ENCODE measurements at regions of chr1 and their contacts with region 1.

Region 1: GRCh38 chr1:155127105-155127964 is at the start of gene EFNA1:
- DNase-seq: peak; percentile 99
- ATAC-seq: peak; percentile 61
- H3K4me3 ChIP-seq: peak within 1 kb of the TSS; percentile 96 to 99 (median 99)
- H3K27ac ChIP-seq: peak within 1 kb of the TSS; percentile 100
- H3K4me1 ChIP-seq: peaks cover 46% of the 10 kb centered on the region
- H3K27me3 ChIP-seq: no peaks in the 10 kb centered on the region; a peak in 1 of 5 replicates
- CTCF ChIP-seq: no peak
- EP300 ChIP-seq: peak; percentile 96 to 99
- POLR2A ChIP-seq: peak in 1 of 2 experiments; percentile 92; a peak in 2 of 4 replicates
- RAD21 ChIP-seq: peak; percentile 18
- total RNA-seq, gene EFNA1: 41.2 and 81.8 TPM in 2 replicates

Region 2: GRCh38 chr1:155091071-155091709 is 36.1 kb before region 1 on chr1:
- CTCF ChIA-PET with region 1: interaction called, 8 read pairs
- POLR2A ChIA-PET with region 1: interaction called, 75 read pairs
- in situ Hi-C with region 1: loop called (anchors 5 kb)
- intact Hi-C with region 1: loop called (anchors 5 kb)
- DNase-seq: peak; percentile 78
- ATAC-seq: peak; percentile 79
- H3K4me3 ChIP-seq: peak overlapping the region in 2 of 3 experiments; percentile 9 to 54; a peak in 2 of 6 replicates
- H3K27ac ChIP-seq: peak overlapping the region; percentile 52
- H3K4me1 ChIP-seq: peaks cover 77% of the 10 kb centered on the region
- H3K27me3 ChIP-seq: peaks cover 0 to 2% of the 10 kb centered on the region in 2 experiments; a peak in 1 of 5 replicates
- CTCF ChIP-seq: peak; percentile 98
- EP300 ChIP-seq: no peak; a peak in 1 of 4 replicates
- POLR2A ChIP-seq: no peak
- RAD21 ChIP-seq: peak; percentile 95

Region 3: DNA sequence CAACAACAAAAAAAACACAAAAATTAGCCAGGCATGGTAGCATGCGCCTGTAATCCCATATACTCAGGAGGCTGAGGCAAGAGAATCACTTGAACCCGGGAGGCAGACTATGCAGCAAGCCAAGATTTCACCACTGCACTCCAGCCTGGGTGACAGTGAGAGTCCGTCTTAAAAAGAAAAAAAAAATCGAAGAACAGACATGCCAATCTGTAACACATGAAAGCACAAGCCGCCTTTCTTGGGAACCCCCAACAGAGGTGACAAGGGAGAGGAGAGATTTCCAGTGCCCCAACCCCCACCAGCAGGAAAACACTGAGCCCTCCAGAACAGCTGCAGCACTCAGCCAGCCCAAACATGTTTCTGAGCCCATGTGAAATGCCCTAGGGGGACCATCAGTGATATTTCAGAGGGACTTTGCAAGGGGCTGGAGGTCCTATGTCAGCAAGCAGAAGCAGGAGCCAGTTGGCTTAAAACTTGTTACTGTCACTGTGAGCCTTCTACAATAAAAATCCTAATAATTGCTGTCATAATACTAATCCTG is 13.8 kb before region 1 on chr1:
- CTCF ChIA-PET with region 1: no interaction called
- POLR2A ChIA-PET with region 1: interaction called, 32 read pairs
- in situ Hi-C with region 1: no loop called
- intact Hi-C with region 1: no loop called
- DNase-seq: no peak
- ATAC-seq: no peak
- H3K4me3 ChIP-seq: no peak overlapping the region
- H3K27ac ChIP-seq: no peak overlapping the region
- H3K4me1 ChIP-seq: peaks cover 23% of the 10 kb centered on the region
- H3K27me3 ChIP-seq: peaks cover 0 to 7% of the 10 kb centered on the region in 2 experiments; a peak in 1 of 5 replicates
- CTCF ChIP-seq: no peak
- EP300 ChIP-seq: no peak
- POLR2A ChIP-seq: no peak
- RAD21 ChIP-seq: no peak

Region 4: GRCh38 chr1:155172732-155173477 is 45.6 kb after region 1 on chr1 and contains the start of gene KRTCAP2:
- CTCF ChIA-PET with region 1: interaction called, 3 read pairs
- POLR2A ChIA-PET with region 1: interaction called, 56 read pairs
- in situ Hi-C with region 1: no loop called
- intact Hi-C with region 1: no loop called
- DNase-seq: peak; percentile 93
- ATAC-seq: peak; percentile 78
- H3K4me3 ChIP-seq: peak within 1 kb of the TSS; percentile 71 to 92 (median 79)
- H3K27ac ChIP-seq: peak within 1 kb of the TSS; percentile 73
- H3K4me1 ChIP-seq: peaks cover 43% of the 10 kb centered on the region
- H3K27me3 ChIP-seq: 0 out of 5 replicates have a peak, but pooled peaks cover 0 to 1% of the 10 kb centered on the region in 2 experiments
- CTCF ChIP-seq: peak; percentile 98
- EP300 ChIP-seq: peak in 1 of 2 experiments; percentile 37; a peak in 1 of 4 replicates
- POLR2A ChIP-seq: peak; percentile 71 to 77
- RAD21 ChIP-seq: peak; percentile 37; the same call in 1 of the 2 replicates
- total RNA-seq, gene KRTCAP2: 48.5 and 79.4 TPM in 2 replicates

Measured in HepG2 (cell line).